ENCODE measurements at regions of chr14 and their contacts with region 1.

Region 1: GRCh38 chr14:67886191-67886590 is 66.6 kb downstream of the RAD51B start:
- DNase-seq: no peak
- H3K4me3 ChIP-seq: no peak overlapping the region
- H3K27ac ChIP-seq: no peak overlapping the region
- H3K4me1 ChIP-seq: no peaks in the 10 kb centered on the region
- H3K27me3 ChIP-seq: no peaks in the 10 kb centered on the region
- CTCF ChIP-seq: no peak

Region 2: DNA sequence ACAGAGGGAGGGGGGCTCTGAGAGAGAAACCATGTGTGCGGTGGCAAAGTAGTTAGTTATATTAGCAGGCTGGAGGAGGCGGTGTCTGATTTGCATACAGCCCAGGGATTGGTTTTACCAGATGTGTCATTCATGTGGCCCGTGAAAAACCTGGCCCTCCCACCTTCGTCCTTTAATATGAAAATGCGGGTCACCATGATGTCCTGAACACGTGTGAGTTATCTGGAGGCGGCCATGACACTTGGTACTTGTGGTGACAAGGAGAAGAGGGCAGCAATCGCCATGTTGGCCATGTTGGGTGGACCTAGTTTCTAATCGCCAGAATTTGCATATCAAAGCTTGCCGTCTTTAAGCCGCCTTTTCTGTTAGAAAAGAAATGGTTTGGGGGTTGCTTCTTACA is 42.2 kb after region 1 on chr14:
- intact Hi-C with region 1: loop called (anchors 5 kb)
- DNase-seq: no peak
- H3K4me3 ChIP-seq: no peak overlapping the region
- H3K27ac ChIP-seq: no peak overlapping the region
- H3K4me1 ChIP-seq: no peaks in the 10 kb centered on the region
- H3K27me3 ChIP-seq: no peaks in the 10 kb centered on the region
- CTCF ChIP-seq: no peak

Measured in tibial artery (tissue), 4 donors.